ENCODE measurements at regions of chr1 and their contacts with region 1.

Region 1: DNA sequence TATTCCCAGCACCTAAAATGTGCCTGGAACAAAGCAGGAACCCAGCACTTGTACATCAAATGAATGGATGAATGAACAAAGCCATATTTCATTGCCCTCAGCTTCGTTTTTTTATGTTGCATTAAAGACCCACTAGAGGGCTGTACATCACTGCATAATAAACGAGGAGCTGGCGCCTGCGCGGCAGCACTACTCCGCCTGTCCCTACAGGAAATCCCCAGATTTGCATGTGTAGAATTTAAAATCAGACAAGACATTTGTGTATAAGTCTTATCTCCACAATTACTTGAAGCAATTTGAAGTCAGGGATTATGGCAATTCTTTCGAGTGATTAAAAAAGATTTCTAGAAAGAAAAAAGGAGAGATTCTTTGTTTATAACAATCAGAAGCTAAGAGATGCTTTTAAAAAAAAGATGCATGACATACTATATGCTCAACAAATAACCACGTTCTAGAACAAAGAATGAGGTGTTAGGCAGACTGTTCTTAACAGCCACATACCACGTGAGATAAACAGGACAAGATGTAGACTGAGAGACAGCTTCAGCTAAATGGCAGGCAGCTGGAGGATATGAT is 5.4 kb upstream of the NEK2 start:
- DNase-seq: peak; percentile 44 to 85 (median 78)
- ATAC-seq: peak; percentile 98
- H3K4me3 ChIP-seq: no peak overlapping the region
- H3K4me3 Mint-ChIP-seq: peak overlapping the region in 9 of 10 donors; percentile 19 to 59 (median 50)
- H3K27ac ChIP-seq: peak overlapping the region; percentile 66
- H3K27ac Mint-ChIP-seq: peak overlapping the region; percentile 79 to 95 (median 87)
- H3K4me1 ChIP-seq: peaks cover 10 to 11% of the 10 kb centered on the region in 2 donors
- H3K4me1 Mint-ChIP-seq: peaks cover 9 to 22% (median 14%) of the 10 kb centered on the region in 7 donors
- H3K27me3 ChIP-seq: no peaks in the 10 kb centered on the region
- H3K27me3 Mint-ChIP-seq: no peaks in the 10 kb centered on the region

Region 2: DNA sequence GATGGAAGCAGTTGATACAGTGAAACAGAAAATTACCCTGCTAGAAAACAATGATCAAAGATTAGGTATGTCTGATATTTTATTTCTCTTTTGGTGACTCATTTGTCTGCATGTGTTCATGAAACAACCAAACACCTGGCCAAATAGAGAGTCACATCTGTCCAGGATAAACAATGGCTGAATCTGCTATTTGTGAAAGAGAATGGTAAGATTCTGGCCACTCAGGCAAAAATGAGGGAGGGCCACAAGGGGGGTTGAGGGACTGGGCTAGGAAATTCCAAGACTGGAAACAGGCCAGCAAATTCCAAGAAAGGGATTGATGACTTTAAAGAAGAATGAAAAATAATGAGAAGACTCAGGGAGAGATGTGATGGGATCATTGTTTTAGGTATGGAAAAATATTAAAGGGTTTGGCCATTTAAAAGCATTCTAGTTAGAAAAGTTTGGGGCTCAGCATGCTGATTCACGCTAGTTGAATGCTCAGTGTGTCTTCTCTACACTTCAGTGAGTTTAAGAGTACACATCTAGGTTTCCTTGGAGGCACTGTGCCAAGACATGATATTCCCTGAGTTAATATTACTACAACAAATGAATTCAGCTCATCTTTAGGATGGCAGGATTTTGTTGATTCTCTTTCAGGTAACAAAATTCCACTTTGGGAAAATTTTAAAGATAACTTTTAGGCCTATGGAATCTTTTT is 309.3 kb before region 1 on chr1:
- CTCF ChIA-PET with region 1: no interaction called
- POLR2A ChIA-PET with region 1: no interaction called
- intact Hi-C with region 1: no loop called
- DNase-seq: no peak
- ATAC-seq: no peak
- H3K4me3 ChIP-seq: no peak overlapping the region
- H3K4me3 Mint-ChIP-seq: no peak overlapping the region
- H3K27ac ChIP-seq: no peak overlapping the region
- H3K27ac Mint-ChIP-seq: peak overlapping the region in 8 of 9 donors; percentile 1 to 86 (median 41)
- H3K4me1 ChIP-seq: no peaks in the 10 kb centered on the region
- H3K4me1 Mint-ChIP-seq: peaks cover 0 to 18% (median 9%) of the 10 kb centered on the region in 7 donors
- H3K27me3 ChIP-seq: no peaks in the 10 kb centered on the region
- H3K27me3 Mint-ChIP-seq: no peaks in the 10 kb centered on the region

Region 3: GRCh38 chr1:211830330-211831142 is 149.7 kb after region 1 on chr1 and contains the start of gene LPGAT1:
- CTCF ChIA-PET with region 1: no interaction called
- POLR2A ChIA-PET with region 1: no interaction called
- intact Hi-C with region 1: loop called (anchors 1 to 2 kb)
- DNase-seq: peak; percentile 28 to 81 (median 54)
- ATAC-seq: peak; percentile 92
- H3K4me3 ChIP-seq: peak within 1 kb of the TSS; percentile 68
- H3K4me3 Mint-ChIP-seq: peak within 1 kb of the TSS; percentile 88 to 97 (median 90)
- H3K27ac ChIP-seq: peak within 1 kb of the TSS; percentile 64
- H3K27ac Mint-ChIP-seq: peak within 1 kb of the TSS; percentile 60 to 94 (median 85)
- H3K4me1 ChIP-seq: peaks cover 20 to 40% of the 10 kb centered on the region in 2 donors
- H3K4me1 Mint-ChIP-seq: peaks cover 34 to 69% (median 64%) of the 10 kb centered on the region in 7 donors
- H3K27me3 ChIP-seq: no peaks in the 10 kb centered on the region
- H3K27me3 Mint-ChIP-seq: peaks cover 0 to 3% (median 0%) of the 10 kb centered on the region in 5 donors
- total RNA-seq, gene LPGAT1: 11.7 to 76.1 (median 19.3) TPM

Region 4: GRCh38 chr1:212062832-212063438 is 382.1 kb after region 1 on chr1:
- CTCF ChIA-PET with region 1: interaction called, 9 read pairs
- POLR2A ChIA-PET with region 1: no interaction called
- intact Hi-C with region 1: loop called (anchors 1 to 2 kb)
- DNase-seq: peak in 6 of 9 donors; percentile 8 to 41 (median 33)
- ATAC-seq: peak; percentile 71
- H3K4me3 ChIP-seq: no peak overlapping the region
- H3K4me3 Mint-ChIP-seq: no peak overlapping the region
- H3K27ac ChIP-seq: no peak overlapping the region
- H3K27ac Mint-ChIP-seq: no peak overlapping the region
- H3K4me1 ChIP-seq: no peaks in the 10 kb centered on the region
- H3K4me1 Mint-ChIP-seq: peaks cover 0 to 11% (median 0%) of the 10 kb centered on the region in 7 donors
- H3K27me3 ChIP-seq: no peaks in the 10 kb centered on the region
- H3K27me3 Mint-ChIP-seq: no peaks in the 10 kb centered on the region

Region 5: DNA sequence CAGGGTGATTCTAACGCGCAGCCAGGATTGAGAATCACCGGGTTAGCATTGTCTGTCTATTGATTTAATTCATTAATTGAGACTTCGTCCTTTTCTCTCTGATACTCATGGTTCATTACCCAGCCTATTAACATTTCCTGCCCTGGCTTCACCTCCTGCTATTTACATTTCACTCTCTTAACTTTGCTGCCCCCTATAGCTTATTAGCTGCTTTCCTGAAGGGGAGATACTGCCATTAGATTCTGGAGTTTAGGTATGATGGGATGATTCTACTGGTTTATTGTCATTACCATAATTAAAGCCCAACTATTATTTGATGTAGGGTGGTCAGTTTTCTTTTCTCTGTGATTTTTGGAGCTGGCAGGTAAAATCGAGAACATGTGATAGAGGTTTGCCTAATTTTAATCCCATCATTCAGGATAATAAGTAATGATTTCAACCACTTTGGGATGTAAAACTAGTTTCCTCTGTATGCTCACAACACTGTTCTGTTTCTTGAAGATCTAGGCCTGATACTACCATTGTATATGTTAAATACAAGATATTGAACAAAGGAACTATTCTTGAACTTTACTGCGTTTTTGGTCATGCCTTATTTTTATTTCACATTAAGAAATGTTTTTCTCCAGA is 610.8 kb after region 1 on chr1:
- CTCF ChIA-PET with region 1: interaction called, 3 read pairs
- POLR2A ChIA-PET with region 1: no interaction called
- intact Hi-C with region 1: loop called in 1 of 2 experiments (anchors 1 kb)
- DNase-seq: peak in 7 of 9 donors; percentile 34 to 60 (median 43)
- ATAC-seq: peak; percentile 90
- H3K4me3 ChIP-seq: no peak overlapping the region
- H3K4me3 Mint-ChIP-seq: peak overlapping the region; percentile 30 to 98 (median 67)
- H3K27ac ChIP-seq: no peak overlapping the region
- H3K27ac Mint-ChIP-seq: peak overlapping the region in 7 of 9 donors; percentile 6 to 70 (median 38)
- H3K4me1 ChIP-seq: peaks cover 48 to 74% of the 10 kb centered on the region in 2 donors
- H3K4me1 Mint-ChIP-seq: peaks cover 55 to 91% (median 82%) of the 10 kb centered on the region in 7 donors
- H3K27me3 ChIP-seq: no peaks in the 10 kb centered on the region
- H3K27me3 Mint-ChIP-seq: no peaks in the 10 kb centered on the region

Region 6: DNA sequence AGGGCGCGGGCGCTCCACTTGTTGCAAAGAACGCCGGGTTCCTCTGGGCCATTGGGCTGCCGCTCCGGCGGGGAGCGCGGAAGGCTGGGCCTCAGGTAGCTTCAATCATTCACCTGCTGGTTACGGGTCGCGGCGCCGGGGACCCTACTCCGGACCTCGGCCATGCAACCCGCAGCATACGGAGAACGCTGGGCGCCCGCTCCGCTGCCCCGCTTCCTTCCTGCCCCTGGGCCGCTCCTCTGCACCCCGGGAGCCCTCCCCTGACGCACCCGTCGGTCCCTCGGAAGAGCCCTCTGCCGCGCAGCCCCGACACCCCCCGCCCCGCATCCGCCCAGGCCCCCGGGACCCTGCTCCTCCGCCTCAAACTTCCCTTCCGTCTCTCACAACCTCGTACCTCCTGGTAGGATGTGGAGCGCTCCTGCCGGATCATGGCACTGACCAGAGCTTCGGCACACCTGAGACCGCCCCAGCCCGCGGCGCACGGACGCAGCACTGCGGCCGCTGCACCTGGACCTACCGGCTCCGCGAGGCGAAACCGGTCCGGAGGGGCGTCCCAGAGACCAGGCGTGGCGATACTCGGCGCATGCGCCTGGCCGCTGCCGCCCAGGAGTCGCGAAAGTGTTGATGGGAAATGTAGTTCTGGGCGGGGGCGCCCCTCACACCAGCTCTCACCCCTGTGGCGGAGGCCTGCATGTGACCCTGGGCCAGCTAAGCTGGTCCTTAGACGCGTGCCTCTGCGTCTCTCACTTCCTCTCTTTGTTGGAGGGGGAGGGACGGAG is 733.7 kb after region 1 on chr1 and contains the start of gene PACC1:
- CTCF ChIA-PET with region 1: no interaction called
- POLR2A ChIA-PET with region 1: no interaction called
- intact Hi-C with region 1: loop called in 1 of 2 experiments (anchors 1 kb)
- DNase-seq: peak; percentile 77 to 89 (median 86)
- ATAC-seq: peak; percentile 98
- H3K4me3 ChIP-seq: peak within 1 kb of the TSS; percentile 98
- H3K4me3 Mint-ChIP-seq: peak within 1 kb of the TSS; percentile 87 to 100 (median 94)
- H3K27ac ChIP-seq: peak within 1 kb of the TSS; percentile 71
- H3K27ac Mint-ChIP-seq: peak within 1 kb of the TSS; percentile 74 to 94 (median 89)
- H3K4me1 ChIP-seq: peaks cover 15 to 19% of the 10 kb centered on the region in 2 donors
- H3K4me1 Mint-ChIP-seq: peaks cover 22 to 46% (median 40%) of the 10 kb centered on the region in 7 donors
- H3K27me3 ChIP-seq: no peaks in the 10 kb centered on the region
- H3K27me3 Mint-ChIP-seq: no peaks in the 10 kb centered on the region
- total RNA-seq, gene PACC1: 7.9 to 13.4 (median 12.0) TPM

Region 7: DNA sequence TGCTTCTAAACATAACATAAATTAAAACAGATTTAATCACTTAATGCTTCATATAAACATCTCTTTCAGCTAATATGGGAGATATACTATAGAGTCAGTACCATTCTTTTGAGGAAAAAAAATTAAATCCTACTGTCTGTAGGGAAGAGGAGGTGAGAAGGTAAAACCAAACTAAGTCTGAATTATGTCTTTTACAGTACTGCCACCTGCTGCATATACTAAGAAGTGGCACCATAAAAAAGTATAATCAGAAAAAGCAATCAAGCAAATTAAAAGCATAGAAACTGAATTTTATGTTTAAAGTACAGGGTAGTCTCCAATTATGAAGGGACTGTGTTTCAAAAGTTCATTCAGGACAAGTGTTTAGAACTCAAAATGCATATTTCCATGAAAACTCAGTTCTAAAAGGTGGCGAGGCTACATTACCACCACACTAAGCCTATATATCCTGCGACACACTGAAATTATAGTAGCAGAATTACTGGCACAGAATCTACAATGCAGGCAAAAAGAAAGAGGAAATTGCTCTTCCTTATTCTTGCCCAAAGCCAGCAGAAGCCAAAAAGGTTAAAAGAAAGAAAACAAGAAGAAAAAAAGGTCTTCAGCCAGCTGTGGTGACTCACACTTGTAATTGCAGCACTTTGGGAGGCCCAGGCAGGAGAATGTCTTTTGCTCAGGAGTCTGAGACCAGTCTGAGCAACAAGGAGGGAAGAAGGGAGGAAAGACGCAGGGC is 1101.7 kb after region 1 on chr1:
- CTCF ChIA-PET with region 1: interaction called, 4 read pairs
- POLR2A ChIA-PET with region 1: no interaction called
- intact Hi-C with region 1: loop called (anchors 5 kb)
- DNase-seq: peak in 6 of 9 donors; percentile 4 to 45 (median 34)
- ATAC-seq: peak; percentile 73
- H3K4me3 ChIP-seq: no peak overlapping the region
- H3K4me3 Mint-ChIP-seq: no peak overlapping the region
- H3K27ac ChIP-seq: no peak overlapping the region
- H3K27ac Mint-ChIP-seq: peak overlapping the region in 1 of 9 donors; percentile 31
- H3K4me1 ChIP-seq: no peaks in the 10 kb centered on the region
- H3K4me1 Mint-ChIP-seq: peaks cover 0 to 18% (median 6%) of the 10 kb centered on the region in 7 donors
- H3K27me3 ChIP-seq: no peaks in the 10 kb centered on the region
- H3K27me3 Mint-ChIP-seq: no peaks in the 10 kb centered on the region